A673 (cell line): ENCODE measurements at regions of chr19 and their contacts with region 1.

Region 1: GRCh38 chr19:18589380-18590272 is 1.0 kb downstream of the REX1BD start:
- DNase-seq: peak; percentile 93
- H3K4me3 ChIP-seq: peak overlapping the region; percentile 83
- H3K27ac ChIP-seq: peak overlapping the region; percentile 96
- H3K4me1 ChIP-seq: peaks cover 40% of the 10 kb centered on the region
- H3K27me3 ChIP-seq: no peaks in the 10 kb centered on the region
- CTCF ChIP-seq: no peak

Region 2: DNA sequence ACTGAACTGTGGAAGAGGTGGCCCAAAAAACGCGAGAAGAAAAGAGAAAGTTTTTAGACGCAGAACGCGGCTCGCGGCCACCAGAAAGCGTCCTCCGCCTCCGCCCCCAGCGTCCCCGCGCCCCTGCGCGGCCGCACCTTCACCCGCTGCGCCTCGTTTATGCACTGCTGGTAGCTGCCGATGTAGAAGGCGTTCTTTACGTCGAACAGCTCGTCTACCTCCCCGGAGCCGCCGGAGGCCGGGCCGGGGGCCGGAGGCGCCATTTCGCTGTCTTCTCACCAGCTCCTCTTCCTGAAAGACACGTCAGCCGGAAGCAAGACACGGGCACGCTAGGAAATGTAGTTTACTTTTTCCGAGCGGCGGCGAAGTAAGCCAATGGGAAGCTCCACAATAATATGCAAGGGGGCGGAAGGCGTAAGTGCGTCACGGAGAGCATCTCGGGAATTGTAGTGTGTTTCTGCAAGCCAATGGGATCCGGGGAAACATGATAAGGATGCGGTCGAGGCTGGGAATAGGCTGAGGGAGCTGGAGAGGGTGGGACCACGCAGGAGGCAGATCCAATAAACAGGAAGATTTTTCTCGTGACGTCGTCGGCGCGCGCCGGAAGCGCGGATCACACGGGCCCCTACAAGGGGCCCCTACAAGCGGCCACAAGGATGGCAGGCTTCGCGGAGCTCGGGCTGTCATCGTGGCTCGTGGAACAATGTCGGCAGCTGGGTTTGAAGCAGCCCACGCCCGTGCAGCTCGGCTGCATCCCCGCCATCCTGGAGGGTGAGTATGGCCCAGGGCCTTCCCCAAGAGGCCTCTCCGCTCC is 329.7 kb after region 1 on chr19 and contains the starts of genes COPE and DDX49:
- CTCF ChIA-PET with region 1: no interaction called
- POLR2A ChIA-PET with region 1: no interaction called
- intact Hi-C with region 1: loop called (anchors 5 kb)
- DNase-seq: peak; percentile 100
- H3K4me3 ChIP-seq: peak within 1 kb of the TSS; percentile 77
- H3K27ac ChIP-seq: peak within 1 kb of the TSS; percentile 89
- H3K4me1 ChIP-seq: peaks cover 6% of the 10 kb centered on the region
- H3K27me3 ChIP-seq: no peaks in the 10 kb centered on the region
- CTCF ChIP-seq: no peak
- total RNA-seq, gene COPE: 244 and 267 TPM in 2 replicates
- total RNA-seq, gene DDX49: 61.1 and 68.8 TPM in 2 replicates